ENCODE measurements at regions of chr16 and their contacts with region 1.

Region 1: DNA sequence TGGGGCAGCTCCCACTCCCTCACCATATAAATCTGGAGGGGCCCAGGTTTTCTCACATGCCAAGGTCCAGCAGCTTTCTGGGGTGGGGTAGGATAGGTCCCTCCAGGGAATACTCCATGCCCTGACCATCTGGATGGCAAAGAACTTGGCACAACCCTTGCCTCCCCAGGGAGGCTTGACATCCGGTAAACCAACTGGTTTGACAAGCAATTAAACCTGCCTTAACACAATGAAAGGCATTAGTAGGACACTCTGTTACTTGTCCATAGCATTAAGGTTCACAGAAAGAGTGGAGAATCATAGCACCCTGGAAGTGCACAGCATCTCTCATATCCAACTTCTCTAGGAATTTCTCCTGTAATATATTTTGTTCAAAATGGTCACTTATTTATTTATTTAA is 63.9 kb upstream of the MAF start:
- DNase-seq: no peak
- H3K4me3 ChIP-seq: no peak overlapping the region
- H3K27ac ChIP-seq: no peak overlapping the region
- H3K4me1 ChIP-seq: no peaks in the 10 kb centered on the region
- H3K27me3 ChIP-seq: no peaks in the 10 kb centered on the region
- CTCF ChIP-seq: no peak
- POLR2A ChIP-seq: no peak

Region 2: DNA sequence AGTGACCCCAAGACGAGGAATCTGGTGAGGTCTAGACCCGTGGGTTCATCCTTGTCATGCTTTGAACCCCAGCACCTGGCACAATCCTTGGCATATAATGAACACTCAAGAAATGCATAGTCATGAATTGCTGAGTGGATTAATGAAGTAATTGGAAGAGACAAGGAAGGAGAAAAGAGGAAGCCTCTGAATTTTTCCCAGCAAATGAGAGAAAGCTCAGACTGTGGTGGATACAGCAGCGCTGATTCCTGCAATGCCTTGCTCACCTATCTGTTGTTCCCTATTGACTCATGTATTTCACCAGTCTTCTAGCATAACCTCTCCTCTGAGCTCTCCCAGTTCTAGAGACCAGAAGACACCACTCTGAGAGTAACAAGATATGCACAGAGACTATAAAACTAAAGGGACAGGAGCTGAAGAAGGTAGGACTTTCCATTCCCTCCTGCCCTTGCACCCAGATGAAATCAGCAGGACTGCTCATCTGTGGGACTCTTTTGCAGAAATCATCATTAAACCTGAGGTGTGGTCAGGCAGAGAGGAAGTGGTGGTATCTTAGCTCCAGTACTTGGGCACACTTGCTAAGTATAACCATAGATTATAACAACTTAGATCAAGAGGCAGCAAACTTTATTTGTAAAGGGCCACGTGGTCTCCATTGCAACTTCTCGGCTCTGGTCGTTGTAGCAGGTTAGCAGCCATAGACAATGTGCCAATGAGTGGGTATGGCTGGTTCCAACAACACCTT is 166.6 kb before region 1 on chr16:
- intact Hi-C with region 1: no loop called
- DNase-seq: no peak
- H3K4me3 ChIP-seq: no peak overlapping the region
- H3K27ac ChIP-seq: no peak overlapping the region
- H3K4me1 ChIP-seq: no peaks in the 10 kb centered on the region
- H3K27me3 ChIP-seq: no peaks in the 10 kb centered on the region
- CTCF ChIP-seq: no peak
- POLR2A ChIP-seq: no peak

Region 3: GRCh38 chr16:79826732-79827475 is 162.5 kb after region 1 on chr16:
- intact Hi-C with region 1: no loop called
- DNase-seq: no peak
- H3K4me3 ChIP-seq: no peak overlapping the region
- H3K27ac ChIP-seq: peak overlapping the region in 1 of 2 donors; percentile 48
- H3K4me1 ChIP-seq: no peaks in the 10 kb centered on the region
- H3K27me3 ChIP-seq: no peaks in the 10 kb centered on the region
- CTCF ChIP-seq: no peak
- POLR2A ChIP-seq: no peak

Region 4: GRCh38 chr16:80084685-80085084 is 420.3 kb after region 1 on chr16:
- intact Hi-C with region 1: loop called (anchors 5 kb)
- DNase-seq: peak in 1 of 2 donors; percentile 33
- H3K4me3 ChIP-seq: peak overlapping the region in 1 of 3 donors; percentile 39
- H3K27ac ChIP-seq: peak overlapping the region in 1 of 2 donors; percentile 35
- H3K4me1 ChIP-seq: no peaks in the 10 kb centered on the region
- H3K27me3 ChIP-seq: no peaks in the 10 kb centered on the region
- CTCF ChIP-seq: peak in 2 of 3 donors; percentile 59 to 61
- POLR2A ChIP-seq: no peak

Region 5: GRCh38 chr16:80288616-80289015 is 624.2 kb after region 1 on chr16:
- intact Hi-C with region 1: no loop called
- DNase-seq: no peak
- H3K4me3 ChIP-seq: no peak overlapping the region
- H3K27ac ChIP-seq: peak overlapping the region in 1 of 2 donors; percentile 59
- H3K4me1 ChIP-seq: no peaks in the 10 kb centered on the region
- H3K27me3 ChIP-seq: no peaks in the 10 kb centered on the region
- CTCF ChIP-seq: no peak
- POLR2A ChIP-seq: no peak